Panc1 (cell line): ENCODE measurements at regions of chr16 and their contacts with region 1.

Region 1: DNA sequence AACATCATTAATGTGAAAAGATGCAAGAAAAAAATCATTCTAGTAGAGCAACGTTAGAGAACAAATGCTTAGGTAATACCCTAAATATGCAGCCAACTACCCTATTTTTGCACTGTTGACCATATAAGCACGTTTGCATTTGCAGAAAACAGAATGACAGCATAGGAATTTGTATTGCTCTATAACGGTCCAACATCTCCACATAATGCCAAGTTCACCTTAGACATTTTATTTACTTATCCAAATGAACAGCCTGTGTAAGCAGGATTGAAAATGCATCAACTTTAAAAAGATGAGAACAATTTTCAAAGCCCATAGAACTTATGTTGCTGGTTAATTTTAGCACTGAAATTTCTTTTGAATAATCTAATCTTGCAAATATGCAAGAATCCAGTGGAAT is 19.1 kb upstream of the RSL1D1 start:
- DNase-seq: no peak
- ATAC-seq: no peak
- H3K4me3 ChIP-seq: no peak overlapping the region
- H3K27ac ChIP-seq: no peak overlapping the region
- H3K4me1 ChIP-seq: peaks cover 17% of the 10 kb centered on the region
- H3K27me3 ChIP-seq: no peaks in the 10 kb centered on the region
- CTCF ChIP-seq: no peak

Region 2: GRCh38 chr16:11836650-11837244 is 33.7 kb before region 1 on chr16:
- CTCF ChIA-PET with region 1: no interaction called
- POLR2A ChIA-PET with region 1: no interaction called
- in situ Hi-C with region 1: no loop called
- intact Hi-C with region 1: no loop called
- DNase-seq: no peak
- ATAC-seq: peak; percentile 61
- H3K4me3 ChIP-seq: no peak overlapping the region
- H3K27ac ChIP-seq: no peak overlapping the region
- H3K4me1 ChIP-seq: peaks cover 6% of the 10 kb centered on the region; the same call in 1 of the 2 replicates
- H3K27me3 ChIP-seq: no peaks in the 10 kb centered on the region
- CTCF ChIP-seq: no peak

Region 3: DNA sequence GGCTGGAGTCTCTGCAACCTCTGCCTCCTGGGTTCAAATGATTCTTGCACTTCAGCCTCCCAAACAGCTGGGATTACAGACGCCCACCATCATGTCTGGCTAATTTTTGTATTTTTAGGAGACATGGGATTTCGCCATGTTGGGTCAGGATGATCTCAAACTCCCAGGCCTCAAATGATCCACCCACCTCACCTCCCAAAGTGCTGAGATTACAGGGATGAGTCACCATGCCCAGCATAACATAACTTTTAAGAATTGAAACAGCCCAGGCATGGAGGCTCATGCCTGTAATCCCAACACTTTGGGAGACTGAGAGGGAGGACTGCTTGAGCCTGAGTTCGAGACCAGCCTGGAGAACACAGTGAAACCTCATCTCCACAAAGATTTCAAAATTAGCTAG is 21.6 kb before region 1 on chr16:
- CTCF ChIA-PET with region 1: no interaction called
- POLR2A ChIA-PET with region 1: interaction called, 11 read pairs
- in situ Hi-C with region 1: no loop called
- intact Hi-C with region 1: no loop called
- DNase-seq: no peak
- ATAC-seq: no peak
- H3K4me3 ChIP-seq: no peak overlapping the region
- H3K27ac ChIP-seq: no peak overlapping the region; the same call in 1 of the 2 replicates
- H3K4me1 ChIP-seq: peaks cover 8% of the 10 kb centered on the region; the same call in 1 of the 2 replicates
- H3K27me3 ChIP-seq: no peaks in the 10 kb centered on the region
- CTCF ChIP-seq: no peak

Region 4: GRCh38 chr16:11990702-11991390 is 120.4 kb after region 1 on chr16:
- CTCF ChIA-PET with region 1: no interaction called
- POLR2A ChIA-PET with region 1: no interaction called
- in situ Hi-C with region 1: no loop called
- intact Hi-C with region 1: no loop called
- DNase-seq: no peak
- ATAC-seq: no peak
- H3K4me3 ChIP-seq: no peak overlapping the region
- H3K27ac ChIP-seq: no peak overlapping the region
- H3K4me1 ChIP-seq: no peaks in the 10 kb centered on the region
- H3K27me3 ChIP-seq: no peaks in the 10 kb centered on the region
- CTCF ChIP-seq: no peak